ENCODE measurements at regions of chr10 and their contacts with region 1.

Region 1: DNA sequence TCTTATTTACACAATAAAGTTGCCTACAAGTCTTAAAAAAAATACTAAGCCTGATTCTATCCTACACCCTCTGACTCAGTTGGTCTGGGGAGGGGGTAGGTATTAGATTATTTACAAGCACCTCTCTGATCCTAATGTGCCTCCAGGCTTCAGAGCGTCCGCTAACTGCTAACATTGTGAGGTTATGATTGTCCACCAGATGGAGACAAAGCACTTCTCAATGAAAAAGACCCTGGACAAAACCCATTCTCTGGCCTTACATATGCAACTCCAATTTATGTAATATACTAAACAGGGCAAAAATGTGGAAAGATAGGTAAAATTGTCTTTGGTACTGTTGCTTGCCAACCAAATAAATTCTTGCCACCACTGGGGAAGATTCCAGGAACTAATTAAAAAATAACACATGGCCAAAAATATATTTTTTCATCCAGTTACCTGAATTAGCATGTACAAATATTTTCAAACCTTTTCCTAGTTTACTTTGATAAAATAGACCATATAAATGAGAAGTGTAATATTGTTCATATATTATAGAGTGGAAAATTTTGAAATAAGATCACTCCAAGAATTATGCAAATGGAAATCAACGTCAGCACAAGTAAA is 92.4 kb downstream of the KIF20B start:
- DNase-seq: peak; percentile 37
- H3K4me3 Mint-ChIP-seq: no peak overlapping the region
- H3K27ac Mint-ChIP-seq: no peak overlapping the region
- H3K4me1 Mint-ChIP-seq: no peaks in the 10 kb centered on the region
- H3K27me3 Mint-ChIP-seq: peaks cover 13% of the 10 kb centered on the region

Region 2: GRCh38 chr10:89426230-89426868 is 367.4 kb before region 1 on chr10:
- CTCF ChIA-PET with region 1: no interaction called
- intact Hi-C with region 1: loop called (anchors 10 kb)
- DNase-seq: peak; percentile 19
- H3K4me3 Mint-ChIP-seq: no peak overlapping the region
- H3K27ac Mint-ChIP-seq: no peak overlapping the region
- H3K4me1 Mint-ChIP-seq: no peaks in the 10 kb centered on the region
- H3K27me3 Mint-ChIP-seq: no peaks in the 10 kb centered on the region

Region 3: GRCh38 chr10:89867964-89868363 is 74.2 kb after region 1 on chr10:
- CTCF ChIA-PET with region 1: no interaction called
- intact Hi-C with region 1: no loop called
- DNase-seq: no peak
- H3K4me3 Mint-ChIP-seq: no peak overlapping the region
- H3K27ac Mint-ChIP-seq: no peak overlapping the region
- H3K4me1 Mint-ChIP-seq: no peaks in the 10 kb centered on the region
- H3K27me3 Mint-ChIP-seq: peaks cover 5% of the 10 kb centered on the region

Region 4: GRCh38 chr10:89954787-89955566 is 161.2 kb after region 1 on chr10:
- CTCF ChIA-PET with region 1: no interaction called
- intact Hi-C with region 1: loop called (anchors 2 kb)
- DNase-seq: no peak
- H3K4me3 Mint-ChIP-seq: no peak overlapping the region
- H3K27ac Mint-ChIP-seq: no peak overlapping the region
- H3K4me1 Mint-ChIP-seq: peaks cover 2% of the 10 kb centered on the region
- H3K27me3 Mint-ChIP-seq: peaks cover 10% of the 10 kb centered on the region

Region 5: DNA sequence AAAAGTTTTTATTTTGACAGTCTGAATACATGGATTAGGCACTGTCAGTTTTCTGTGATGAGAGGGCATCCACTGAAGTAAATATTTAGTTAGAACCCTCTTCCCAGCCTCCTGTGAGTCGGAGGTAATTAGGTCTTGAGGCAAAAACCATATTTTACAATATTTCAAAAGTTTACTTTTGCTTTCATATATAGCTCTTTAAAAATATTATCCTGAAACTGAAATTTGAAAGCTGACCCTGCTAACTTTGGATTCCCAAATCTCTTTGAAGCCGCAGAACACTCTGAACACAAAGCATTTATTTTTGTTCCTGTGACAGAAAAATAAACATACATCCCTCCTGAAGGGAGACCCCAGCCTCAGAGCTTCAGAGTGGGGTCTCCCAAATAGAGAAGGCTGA is 225.1 kb after region 1 on chr10:
- CTCF ChIA-PET with region 1: no interaction called
- intact Hi-C with region 1: no loop called
- DNase-seq: no peak
- H3K4me3 Mint-ChIP-seq: no peak overlapping the region
- H3K27ac Mint-ChIP-seq: no peak overlapping the region
- H3K4me1 Mint-ChIP-seq: no peaks in the 10 kb centered on the region
- H3K27me3 Mint-ChIP-seq: peaks cover 2% of the 10 kb centered on the region

Region 6: DNA sequence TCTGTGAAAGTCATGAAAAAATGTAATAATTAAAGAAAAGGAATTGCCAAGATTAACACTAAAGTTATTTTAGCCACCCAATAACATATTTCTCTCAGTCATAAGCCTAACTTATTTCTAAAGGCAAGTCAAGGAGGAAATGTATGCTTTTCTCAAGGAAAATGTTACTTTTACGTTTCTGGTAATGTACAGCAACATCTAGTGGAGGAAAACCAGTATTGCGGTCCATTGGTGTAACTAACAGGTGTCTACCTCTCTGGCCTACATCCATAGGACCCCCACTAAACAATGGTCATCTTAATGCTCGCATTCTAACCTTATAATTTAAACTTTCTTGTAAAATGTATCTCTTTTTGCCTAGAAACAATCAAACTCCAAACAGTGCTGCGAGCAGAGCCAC is 345.1 kb after region 1 on chr10:
- CTCF ChIA-PET with region 1: no interaction called
- intact Hi-C with region 1: loop called (anchors 1 kb)
- DNase-seq: no peak
- H3K4me3 Mint-ChIP-seq: no peak overlapping the region
- H3K27ac Mint-ChIP-seq: no peak overlapping the region
- H3K4me1 Mint-ChIP-seq: no peaks in the 10 kb centered on the region
- H3K27me3 Mint-ChIP-seq: peaks cover 3% of the 10 kb centered on the region

Region 7: DNA sequence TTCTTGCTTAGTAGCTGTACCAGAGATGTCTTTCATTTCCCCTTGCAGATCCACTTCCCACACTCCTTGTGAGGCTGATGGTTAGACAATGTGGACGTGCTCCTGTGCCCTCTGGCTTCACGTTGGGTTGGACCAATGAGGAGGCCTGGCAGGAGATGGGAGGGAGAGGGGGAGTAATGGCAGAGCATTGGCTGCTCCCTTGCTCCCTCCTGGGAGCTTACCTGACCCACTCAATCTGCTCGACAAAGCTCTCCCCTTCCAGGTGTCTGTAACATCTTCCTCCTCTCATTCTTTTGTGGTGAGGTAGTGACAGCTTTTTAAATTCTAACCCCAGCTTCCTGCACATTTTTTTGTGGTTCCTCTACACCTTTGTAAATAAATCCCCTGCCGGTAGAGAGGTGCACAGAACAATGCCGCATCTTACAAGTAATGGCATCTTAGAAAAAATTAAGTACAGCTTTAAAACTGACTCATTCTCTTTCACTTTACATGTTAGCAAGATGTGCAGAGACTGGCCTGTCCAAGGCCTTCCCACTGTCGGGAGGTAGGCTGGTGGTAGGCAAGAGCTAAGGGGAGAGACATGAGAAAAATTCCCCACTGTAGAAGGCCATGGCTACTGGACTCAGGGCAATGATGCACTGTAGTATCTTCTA is 929.8 kb after region 1 on chr10:
- CTCF ChIA-PET with region 1: no interaction called
- intact Hi-C with region 1: loop called (anchors 10 kb)
- DNase-seq: peak; percentile 8
- H3K4me3 Mint-ChIP-seq: no peak overlapping the region
- H3K27ac Mint-ChIP-seq: no peak overlapping the region
- H3K4me1 Mint-ChIP-seq: peaks cover 13% of the 10 kb centered on the region
- H3K27me3 Mint-ChIP-seq: no peaks in the 10 kb centered on the region

Region 8: GRCh38 chr10:90862908-90863514 is 1069.3 kb after region 1 on chr10:
- CTCF ChIA-PET with region 1: no interaction called
- intact Hi-C with region 1: loop called (anchors 1 kb)
- DNase-seq: peak; percentile 10
- H3K4me3 Mint-ChIP-seq: no peak overlapping the region
- H3K27ac Mint-ChIP-seq: no peak overlapping the region
- H3K4me1 Mint-ChIP-seq: peaks cover 4% of the 10 kb centered on the region
- H3K27me3 Mint-ChIP-seq: peaks cover 28% of the 10 kb centered on the region